Naive thymus-derived CD4-positive, alpha-beta T cell (primary cell): ENCODE measurements at regions of chr12 and their contacts with region 1.

Region 1: GRCh38 chr12:13094347-13094746 is 9.1 kb downstream of the GSG1 start:
- DNase-seq: no peak
- ATAC-seq: no peak
- H3K4me3 ChIP-seq: no peak overlapping the region
- H3K4me3 Mint-ChIP-seq: no peak overlapping the region
- H3K27ac ChIP-seq: no peak overlapping the region
- H3K27ac Mint-ChIP-seq: no peak overlapping the region
- H3K4me1 ChIP-seq: peaks cover 0 to 14% of the 10 kb centered on the region in 2 donors
- H3K4me1 Mint-ChIP-seq: peaks cover 12 to 19% (median 18%) of the 10 kb centered on the region in 7 donors
- H3K27me3 ChIP-seq: no peaks in the 10 kb centered on the region
- H3K27me3 Mint-ChIP-seq: peaks cover 0 to 7% (median 0%) of the 10 kb centered on the region in 5 donors

Region 2: GRCh38 chr12:13233830-13234641 is 139.7 kb after region 1 on chr12:
- CTCF ChIA-PET with region 1: no interaction called
- POLR2A ChIA-PET with region 1: no interaction called
- intact Hi-C with region 1: loop called (anchors 1 kb)
- DNase-seq: peak in 6 of 9 donors; percentile 3 to 34 (median 22)
- ATAC-seq: peak; percentile 62
- H3K4me3 ChIP-seq: no peak overlapping the region
- H3K4me3 Mint-ChIP-seq: no peak overlapping the region
- H3K27ac ChIP-seq: no peak overlapping the region
- H3K27ac Mint-ChIP-seq: no peak overlapping the region
- H3K4me1 ChIP-seq: no peaks in the 10 kb centered on the region
- H3K4me1 Mint-ChIP-seq: no peaks in the 10 kb centered on the region
- H3K27me3 ChIP-seq: no peaks in the 10 kb centered on the region
- H3K27me3 Mint-ChIP-seq: peaks cover 0 to 16% (median 8%) of the 10 kb centered on the region in 5 donors

Region 3: DNA sequence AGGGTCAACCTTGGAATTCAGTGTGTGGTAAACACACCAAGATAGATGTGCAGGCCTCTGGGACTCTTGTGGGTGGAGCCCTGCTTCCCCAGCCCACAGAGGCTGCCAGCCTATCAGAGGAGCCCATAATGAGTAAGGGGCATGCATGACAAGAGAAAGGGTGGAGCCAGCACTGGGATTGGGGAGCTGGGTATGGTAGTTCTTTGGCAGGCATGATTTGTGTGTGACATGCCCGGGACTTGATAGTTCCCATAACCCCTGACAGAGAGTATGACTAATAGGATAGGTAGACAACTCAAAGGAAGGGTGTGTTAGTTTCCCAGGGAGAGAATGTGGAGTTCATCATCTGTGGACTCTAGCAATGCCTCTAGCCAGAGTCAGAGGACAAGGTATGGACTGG is 245.2 kb after region 1 on chr12:
- CTCF ChIA-PET with region 1: no interaction called
- POLR2A ChIA-PET with region 1: no interaction called
- intact Hi-C with region 1: no loop called
- DNase-seq: no peak
- ATAC-seq: no peak
- H3K4me3 ChIP-seq: no peak overlapping the region
- H3K4me3 Mint-ChIP-seq: no peak overlapping the region
- H3K27ac ChIP-seq: no peak overlapping the region
- H3K27ac Mint-ChIP-seq: no peak overlapping the region
- H3K4me1 ChIP-seq: no peaks in the 10 kb centered on the region
- H3K4me1 Mint-ChIP-seq: peaks cover 0 to 1% (median 0%) of the 10 kb centered on the region in 7 donors
- H3K27me3 ChIP-seq: no peaks in the 10 kb centered on the region
- H3K27me3 Mint-ChIP-seq: peaks cover 5 to 32% (median 21%) of the 10 kb centered on the region in 5 donors